HepG2 (cell line): ENCODE measurements at regions of chr2 and their contacts with region 1.

Region 1: DNA sequence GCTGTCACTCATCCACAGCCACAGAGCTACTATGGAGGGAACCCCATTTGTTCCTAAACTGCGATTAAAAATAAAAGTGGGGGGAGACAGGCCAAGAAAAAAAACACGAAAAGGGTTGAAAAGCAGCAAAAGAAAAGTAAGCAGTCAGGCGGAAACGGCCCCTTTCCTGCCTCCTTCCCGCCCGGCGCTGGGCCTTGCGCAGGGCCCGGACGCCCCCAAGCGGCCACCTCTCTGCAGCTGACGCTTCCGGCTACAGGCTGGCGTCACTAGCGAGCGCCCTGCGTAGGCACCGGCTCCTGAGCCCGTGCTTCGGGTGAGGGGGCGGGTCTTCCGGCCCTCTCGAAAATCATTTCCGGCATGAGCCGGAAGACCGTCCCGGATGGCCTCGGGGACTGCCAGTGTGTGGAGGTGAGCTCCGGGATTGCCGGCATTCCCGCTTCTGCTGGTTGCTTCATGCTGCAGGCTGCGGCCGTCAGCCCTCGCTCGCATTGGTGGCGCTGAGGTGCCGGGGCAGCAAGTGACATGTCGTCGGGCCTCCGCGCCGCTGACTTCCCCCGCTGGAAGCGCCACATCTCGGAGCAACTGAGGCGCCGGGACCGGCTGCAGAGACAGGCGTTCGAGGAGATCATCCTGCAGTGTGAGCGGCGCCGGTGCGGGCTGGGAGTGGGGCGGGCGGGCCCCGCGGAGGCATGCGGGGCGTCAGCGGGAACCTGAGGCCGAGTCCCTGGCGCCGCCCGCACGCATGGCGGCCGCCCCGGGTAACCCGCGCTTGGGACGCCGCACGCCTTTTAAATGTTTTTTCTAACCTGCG is at the start of gene ATG16L1:
- DNase-seq: peak; percentile 96
- ATAC-seq: peak; percentile 97
- H3K4me3 ChIP-seq: peak within 1 kb of the TSS; percentile 88 to 98 (median 90)
- H3K27ac ChIP-seq: peak within 1 kb of the TSS; percentile 82
- H3K4me1 ChIP-seq: peaks cover 50% of the 10 kb centered on the region
- H3K27me3 ChIP-seq: no peaks in the 10 kb centered on the region; a peak in 1 of 5 replicates
- CTCF ChIP-seq: peak; percentile 99
- EP300 ChIP-seq: peak in 1 of 2 experiments; percentile 51; a peak in 1 of 4 replicates
- POLR2A ChIP-seq: peak; percentile 93 to 97
- RAD21 ChIP-seq: peak; percentile 100
- total RNA-seq, gene ATG16L1: 51.7 and 61.2 TPM in 2 replicates

Region 2: GRCh38 chr2:232761301-232761907 is 490.1 kb before region 1 on chr2:
- CTCF ChIA-PET with region 1: no interaction called
- POLR2A ChIA-PET with region 1: no interaction called
- in situ Hi-C with region 1: no loop called
- intact Hi-C with region 1: loop called (anchors 5 kb)
- DNase-seq: peak; percentile 46
- ATAC-seq: peak; percentile 69
- H3K4me3 ChIP-seq: no peak overlapping the region
- H3K27ac ChIP-seq: no peak overlapping the region
- H3K4me1 ChIP-seq: no peaks in the 10 kb centered on the region
- H3K27me3 ChIP-seq: no peaks in the 10 kb centered on the region
- CTCF ChIP-seq: peak; percentile 53
- EP300 ChIP-seq: no peak
- POLR2A ChIP-seq: no peak
- RAD21 ChIP-seq: no peak

Region 3: GRCh38 chr2:233012301-233012971 is 239.1 kb before region 1 on chr2:
- CTCF ChIA-PET with region 1: no interaction called
- POLR2A ChIA-PET with region 1: no interaction called
- in situ Hi-C with region 1: no loop called
- intact Hi-C with region 1: loop called (anchors 5 kb)
- DNase-seq: peak; percentile 65
- ATAC-seq: peak; percentile 53
- H3K4me3 ChIP-seq: peak overlapping the region; percentile 66 to 93 (median 80)
- H3K27ac ChIP-seq: peak overlapping the region; percentile 93
- H3K4me1 ChIP-seq: peaks cover 42% of the 10 kb centered on the region
- H3K27me3 ChIP-seq: no peaks in the 10 kb centered on the region; a peak in 1 of 5 replicates
- CTCF ChIP-seq: no peak
- EP300 ChIP-seq: peak in 1 of 2 experiments; percentile 55; a peak in 1 of 4 replicates
- POLR2A ChIP-seq: peak; percentile 34 to 42; a peak in 1 of 4 replicates
- RAD21 ChIP-seq: no peak

Region 4: DNA sequence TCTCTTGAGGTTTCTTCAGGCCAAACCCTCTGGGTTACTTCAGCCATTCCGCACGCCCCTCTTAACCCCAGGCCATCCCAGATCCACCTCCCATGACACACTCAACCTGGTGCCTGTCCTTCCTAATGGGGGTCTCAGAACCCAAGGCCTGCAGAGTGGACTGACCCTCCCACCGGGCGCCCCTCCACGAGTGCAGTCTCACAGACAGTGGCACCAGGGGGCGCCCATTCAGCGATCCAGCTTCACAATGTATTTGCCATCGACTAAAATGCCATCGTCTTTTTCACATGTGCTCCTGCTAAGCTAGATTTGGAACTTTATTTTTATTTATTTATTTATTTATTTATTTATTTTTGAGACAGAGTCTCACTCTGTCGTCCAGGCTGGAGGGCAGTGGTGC is 152.9 kb before region 1 on chr2:
- CTCF ChIA-PET with region 1: interaction called, 10 read pairs
- POLR2A ChIA-PET with region 1: no interaction called
- in situ Hi-C with region 1: no loop called
- intact Hi-C with region 1: loop called (anchors 2 kb)
- DNase-seq: peak; percentile 31
- ATAC-seq: peak; percentile 79
- H3K4me3 ChIP-seq: no peak overlapping the region
- H3K27ac ChIP-seq: no peak overlapping the region
- H3K4me1 ChIP-seq: no peaks in the 10 kb centered on the region
- H3K27me3 ChIP-seq: no peaks in the 10 kb centered on the region
- CTCF ChIP-seq: peak; percentile 64
- EP300 ChIP-seq: no peak
- POLR2A ChIP-seq: no peak
- RAD21 ChIP-seq: 0 out of 2 replicates have a peak, but pooled peaks have one; percentile 47

Region 5: GRCh38 chr2:233443468-233444183 is 192.1 kb after region 1 on chr2:
- CTCF ChIA-PET with region 1: no interaction called
- POLR2A ChIA-PET with region 1: no interaction called
- in situ Hi-C with region 1: no loop called
- intact Hi-C with region 1: loop called (anchors 1 kb)
- DNase-seq: peak; percentile 69
- ATAC-seq: peak; percentile 69
- H3K4me3 ChIP-seq: no peak overlapping the region
- H3K27ac ChIP-seq: no peak overlapping the region
- H3K4me1 ChIP-seq: peaks cover 8% of the 10 kb centered on the region
- H3K27me3 ChIP-seq: no peaks in the 10 kb centered on the region
- CTCF ChIP-seq: peak; percentile 81
- EP300 ChIP-seq: no peak
- POLR2A ChIP-seq: no peak
- RAD21 ChIP-seq: peak; percentile 83